ENCODE measurements at regions of chr5 and their contacts with region 1.

Region 1: GRCh38 chr5:90184764-90185163 is 224.8 kb downstream of the CETN3 start:
- DNase-seq: no peak
- ATAC-seq: no peak
- H3K4me3 ChIP-seq: no peak overlapping the region
- H3K27ac ChIP-seq: no peak overlapping the region
- H3K4me1 ChIP-seq: peaks cover 15% of the 10 kb centered on the region
- H3K27me3 ChIP-seq: no peaks in the 10 kb centered on the region
- CTCF ChIP-seq: no peak

Region 2: DNA sequence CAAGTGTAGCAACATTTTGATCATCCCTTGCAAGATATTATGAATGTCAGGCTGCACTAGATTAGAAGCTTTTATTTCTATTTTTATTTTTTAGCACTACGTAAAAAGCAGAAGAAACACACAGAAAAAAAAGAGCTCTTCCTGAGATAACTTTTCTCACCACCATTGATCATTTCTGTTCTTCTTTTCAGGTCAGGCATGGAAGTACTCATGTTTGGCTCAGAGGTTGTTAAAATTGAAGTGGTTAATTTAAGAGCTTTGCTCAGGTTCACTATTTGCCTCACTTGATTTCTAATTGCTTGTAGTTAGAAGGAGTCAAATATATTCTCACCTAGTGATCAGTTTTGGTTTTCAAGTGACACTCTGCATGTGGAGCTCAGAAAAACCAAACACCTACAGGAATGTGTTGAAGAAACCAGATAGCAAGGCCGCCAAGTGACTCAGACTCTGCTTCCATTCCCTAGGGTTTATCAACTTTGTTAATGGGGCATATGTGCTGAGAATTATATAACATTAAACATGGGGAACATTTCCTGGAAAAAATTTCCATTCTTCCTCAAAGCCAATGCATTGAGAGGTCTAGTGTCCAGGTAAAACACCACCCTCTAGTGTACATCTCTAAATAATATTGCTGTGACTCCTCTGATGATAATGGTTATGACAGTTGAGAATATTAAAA is 455.0 kb before region 1 on chr5:
- CTCF ChIA-PET with region 1: no interaction called
- POLR2A ChIA-PET with region 1: no interaction called
- intact Hi-C with region 1: loop called (anchors 5 kb)
- DNase-seq: peak; percentile 73
- ATAC-seq: peak; percentile 88
- H3K4me3 ChIP-seq: no peak overlapping the region
- H3K27ac ChIP-seq: no peak overlapping the region
- H3K4me1 ChIP-seq: 0 out of 2 replicates have a peak, but pooled peaks cover 4% of the 10 kb centered on the region
- H3K27me3 ChIP-seq: no peaks in the 10 kb centered on the region
- CTCF ChIP-seq: peak; percentile 80

Region 3: GRCh38 chr5:89968958-89969381 is 215.8 kb before region 1 on chr5:
- CTCF ChIA-PET with region 1: no interaction called
- POLR2A ChIA-PET with region 1: no interaction called
- intact Hi-C with region 1: loop called (anchors 5 kb)
- DNase-seq: no peak
- ATAC-seq: no peak
- H3K4me3 ChIP-seq: no peak overlapping the region
- H3K27ac ChIP-seq: no peak overlapping the region
- H3K4me1 ChIP-seq: no peaks in the 10 kb centered on the region
- H3K27me3 ChIP-seq: no peaks in the 10 kb centered on the region
- CTCF ChIP-seq: no peak

Measured in PC-3 (cell line).